Prostate gland (tissue), 2 donors: ENCODE measurements at regions of chr11 and their contacts with region 1.

Region 1: DNA sequence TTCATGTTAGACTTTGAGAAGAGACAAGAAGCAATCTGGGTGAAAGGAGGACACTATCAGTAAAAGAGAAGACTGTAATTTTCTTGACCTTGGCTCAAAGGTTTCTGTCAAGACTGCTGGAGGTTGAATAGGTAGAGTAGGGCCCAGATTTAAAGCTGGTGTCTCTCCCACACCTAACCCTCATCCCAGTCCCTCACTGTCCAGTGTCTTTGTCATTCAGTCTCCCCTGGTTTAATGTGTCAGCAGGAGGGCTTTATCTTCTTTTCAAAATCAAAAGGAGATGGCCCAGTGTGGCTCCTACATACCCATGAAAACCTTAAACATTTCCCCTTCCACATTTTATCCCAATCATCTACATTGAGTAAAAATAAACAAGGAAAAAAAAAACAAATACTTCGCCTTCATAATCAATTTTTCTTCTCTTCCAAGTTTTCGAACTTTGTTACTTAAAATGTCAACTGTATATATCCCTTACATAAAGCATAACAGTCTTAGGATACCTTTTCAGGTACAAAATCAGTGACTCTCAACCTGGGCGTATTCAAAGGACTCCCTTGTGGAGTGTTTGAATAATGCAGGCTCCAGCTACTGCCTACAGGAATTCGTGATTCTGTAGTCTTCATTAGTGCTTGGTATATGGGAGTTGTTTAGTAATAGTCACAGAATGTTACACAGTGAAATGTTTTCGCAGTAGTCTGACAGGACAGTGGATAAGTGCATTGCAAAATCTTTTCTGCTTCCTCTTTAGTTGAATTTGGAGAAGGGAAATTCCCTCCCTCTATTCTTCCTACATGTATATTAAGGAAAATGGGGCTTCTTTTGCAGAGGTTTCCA is 87.2 kb downstream of the FAT3 start:
- DNase-seq: no peak
- H3K4me3 ChIP-seq: no peak overlapping the region
- H3K27ac ChIP-seq: no peak overlapping the region
- H3K4me1 ChIP-seq: no peaks in the 10 kb centered on the region
- H3K27me3 ChIP-seq: no peaks in the 10 kb centered on the region
- CTCF ChIP-seq: no peak
- POLR2A ChIP-seq: no peak

Region 2: DNA sequence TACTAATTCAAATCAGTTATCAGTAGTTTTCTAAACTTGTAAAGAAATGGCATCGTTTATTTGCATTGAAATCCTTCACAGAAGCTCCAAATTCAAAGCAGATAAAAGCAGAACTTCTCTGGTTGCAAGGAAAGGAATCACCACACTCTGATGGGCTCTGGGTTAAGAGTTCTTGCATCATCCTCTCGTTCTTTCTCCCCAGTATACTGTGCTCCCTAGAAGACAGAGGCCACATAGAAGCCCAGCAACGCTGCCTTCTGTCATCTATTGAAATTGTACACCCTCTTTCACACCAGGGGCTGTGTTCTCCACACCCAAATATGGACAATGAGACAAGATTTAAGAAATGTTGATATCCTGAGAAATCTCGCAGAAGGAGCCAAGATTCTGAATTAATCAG is 57.9 kb before region 1 on chr11:
- intact Hi-C with region 1: loop called (anchors 10 kb)
- DNase-seq: no peak
- H3K4me3 ChIP-seq: no peak overlapping the region
- H3K27ac ChIP-seq: no peak overlapping the region
- H3K4me1 ChIP-seq: no peaks in the 10 kb centered on the region
- H3K27me3 ChIP-seq: no peaks in the 10 kb centered on the region
- CTCF ChIP-seq: no peak
- POLR2A ChIP-seq: no peak

Region 3: DNA sequence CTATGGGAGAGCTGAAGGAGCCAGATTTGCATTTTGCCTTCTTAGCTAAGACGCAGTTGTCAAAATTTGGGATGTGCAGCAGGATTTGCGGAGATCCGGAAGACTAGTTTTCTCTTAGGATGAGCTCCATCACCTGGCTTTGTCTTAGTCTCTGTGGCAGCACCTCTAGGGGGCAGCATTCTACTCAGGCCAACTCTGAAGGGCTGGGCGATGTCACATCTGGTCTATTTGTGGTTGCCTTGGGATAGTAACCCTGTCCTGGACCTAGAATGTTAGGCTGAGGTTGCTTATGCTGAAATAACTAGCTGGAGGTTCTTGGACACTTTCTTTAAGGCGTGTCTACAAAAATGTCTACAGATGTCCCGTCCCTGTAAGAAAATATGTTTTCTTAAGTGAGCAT is 29.0 kb after region 1 on chr11:
- intact Hi-C with region 1: no loop called
- DNase-seq: no peak
- H3K4me3 ChIP-seq: no peak overlapping the region
- H3K27ac ChIP-seq: no peak overlapping the region
- H3K4me1 ChIP-seq: no peaks in the 10 kb centered on the region
- H3K27me3 ChIP-seq: no peaks in the 10 kb centered on the region
- CTCF ChIP-seq: no peak
- POLR2A ChIP-seq: no peak